ENCODE measurements at regions of chr12 and their contacts with region 1.

Region 1: DNA sequence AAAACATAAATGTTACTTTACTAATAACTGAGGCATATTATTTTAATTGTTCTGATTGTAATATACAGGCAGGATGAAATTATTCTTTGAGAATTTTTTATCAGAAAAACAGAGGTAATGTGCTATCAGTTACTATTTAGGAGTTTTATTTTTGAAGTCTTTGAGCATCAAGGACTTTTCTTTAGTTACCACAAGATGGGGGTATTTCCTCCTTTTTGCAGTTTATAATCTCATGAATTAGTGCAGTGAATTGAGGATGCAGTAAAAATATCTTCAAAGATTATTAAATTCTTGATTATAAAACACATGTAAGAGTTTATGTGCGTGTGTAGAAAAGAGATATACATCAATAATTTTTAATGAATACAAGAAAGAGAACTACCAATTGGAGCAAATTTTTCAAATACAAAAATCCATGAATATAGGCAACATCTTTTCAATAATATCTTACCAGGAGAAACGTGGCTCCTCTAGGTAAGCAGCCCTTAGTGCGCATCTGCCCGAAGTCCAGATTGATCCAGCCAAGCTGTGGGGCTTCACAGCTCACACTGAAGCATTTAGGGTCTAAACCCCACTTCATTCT is 71.6 kb downstream of the ERGIC2 start:
- DNase-seq: no peak
- H3K4me3 ChIP-seq: no peak overlapping the region
- H3K27ac ChIP-seq: no peak overlapping the region
- H3K4me1 ChIP-seq: no peaks in the 10 kb centered on the region
- H3K27me3 ChIP-seq: no peaks in the 10 kb centered on the region
- CTCF ChIP-seq: peak in 3 of 4 experiments; percentile 17 to 41 (median 24)
- POLR2A ChIP-seq: no peak

Region 2: GRCh38 chr12:29026419-29026818 is 283.0 kb before region 1 on chr12:
- intact Hi-C with region 1: no loop called
- DNase-seq: no peak
- H3K4me3 ChIP-seq: no peak overlapping the region
- H3K27ac ChIP-seq: no peak overlapping the region
- H3K4me1 ChIP-seq: no peaks in the 10 kb centered on the region
- H3K27me3 ChIP-seq: no peaks in the 10 kb centered on the region
- CTCF ChIP-seq: no peak
- POLR2A ChIP-seq: no peak

Region 3: DNA sequence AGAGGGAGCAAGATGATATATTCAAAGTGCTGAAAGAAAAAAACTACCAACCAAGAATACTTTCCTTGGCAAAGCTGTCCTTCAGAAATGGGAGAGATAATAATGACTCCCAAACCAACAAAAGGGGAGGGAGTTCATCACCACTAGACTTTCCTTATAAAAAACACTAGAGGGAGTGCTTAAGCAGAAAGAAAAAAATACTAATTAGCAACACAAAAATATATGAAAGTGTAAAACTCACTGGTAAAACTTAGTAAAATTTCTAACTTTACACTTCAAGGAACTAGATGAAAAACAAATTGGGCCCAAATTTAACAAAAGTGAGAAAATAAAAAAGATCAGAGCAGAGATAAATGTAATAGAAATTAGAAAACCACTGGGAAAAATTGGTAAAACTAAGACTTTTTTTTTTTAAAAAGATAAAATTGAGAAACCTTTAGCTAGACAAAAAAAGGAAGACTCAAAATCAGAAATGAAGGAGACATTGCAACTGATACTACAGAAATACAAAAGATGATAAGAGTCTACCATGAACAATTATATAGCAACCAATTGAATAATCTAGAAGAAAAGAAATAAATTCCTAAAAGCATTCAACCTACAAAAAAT is 220.7 kb before region 1 on chr12:
- intact Hi-C with region 1: loop called (anchors 10 kb)
- DNase-seq: no peak
- H3K4me3 ChIP-seq: no peak overlapping the region
- H3K27ac ChIP-seq: no peak overlapping the region
- H3K4me1 ChIP-seq: no peaks in the 10 kb centered on the region
- H3K27me3 ChIP-seq: no peaks in the 10 kb centered on the region
- CTCF ChIP-seq: peak in 1 of 4 experiments; percentile 18
- POLR2A ChIP-seq: no peak

Measured in prostate gland (tissue), 2 donors.